Activated naive CD4-positive, alpha-beta T cell treated with anti-CD3 and anti-CD28 coated beads for 36 hours (primary cell): ENCODE measurements at regions of chr7 and their contacts with region 1.

Region 1: DNA sequence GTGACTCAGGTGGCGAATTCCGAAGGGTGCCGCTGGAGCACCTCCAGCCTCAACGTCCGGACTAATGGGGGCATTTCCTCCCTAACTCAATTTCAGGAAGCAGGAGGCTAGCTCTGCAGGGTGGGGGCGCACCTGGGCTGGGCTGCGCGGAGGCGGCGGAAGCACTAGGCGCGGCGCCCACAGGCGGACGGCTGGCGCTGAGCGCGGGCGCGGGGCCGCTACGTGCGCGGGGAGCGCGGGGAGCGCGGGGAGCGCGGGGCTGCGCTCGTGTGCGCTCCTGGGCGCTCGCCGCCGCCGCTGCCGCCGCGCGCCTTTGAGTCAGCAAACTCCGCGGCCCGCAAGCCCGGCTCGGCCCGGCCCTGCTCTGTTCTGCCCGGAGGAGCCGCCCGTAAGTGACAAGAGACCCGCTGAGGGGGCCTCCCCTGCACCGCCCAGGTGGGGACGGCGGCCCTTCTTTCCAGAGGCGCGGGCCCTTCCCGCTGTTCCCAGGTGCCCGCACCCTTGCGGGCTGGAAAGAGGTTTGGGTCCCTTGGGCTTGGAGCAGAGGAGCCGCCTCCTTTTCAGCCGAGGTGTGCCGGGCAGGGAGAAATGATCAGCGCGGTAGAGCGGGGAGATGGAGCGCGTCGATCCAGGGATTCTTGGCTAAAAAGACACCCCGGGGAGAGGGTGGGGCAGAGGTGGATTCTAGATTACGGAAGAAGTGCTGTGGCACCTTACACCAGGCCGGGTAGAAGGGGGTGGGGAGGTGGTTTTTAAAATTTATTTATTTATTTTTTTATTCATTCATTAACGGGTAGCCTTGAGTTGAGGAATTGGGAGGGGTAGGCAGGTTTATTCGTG is at the start of gene SNX10:
- DNase-seq: peak; percentile 78
- H3K4me3 Mint-ChIP-seq: peak within 1 kb of the TSS; percentile 88
- H3K27ac Mint-ChIP-seq: peak within 1 kb of the TSS; percentile 59
- H3K4me1 Mint-ChIP-seq: peaks cover 26% of the 10 kb centered on the region
- H3K27me3 Mint-ChIP-seq: no peaks in the 10 kb centered on the region
- total RNA-seq, gene SNX10: 17.0 to 17.5 TPM

Region 2: DNA sequence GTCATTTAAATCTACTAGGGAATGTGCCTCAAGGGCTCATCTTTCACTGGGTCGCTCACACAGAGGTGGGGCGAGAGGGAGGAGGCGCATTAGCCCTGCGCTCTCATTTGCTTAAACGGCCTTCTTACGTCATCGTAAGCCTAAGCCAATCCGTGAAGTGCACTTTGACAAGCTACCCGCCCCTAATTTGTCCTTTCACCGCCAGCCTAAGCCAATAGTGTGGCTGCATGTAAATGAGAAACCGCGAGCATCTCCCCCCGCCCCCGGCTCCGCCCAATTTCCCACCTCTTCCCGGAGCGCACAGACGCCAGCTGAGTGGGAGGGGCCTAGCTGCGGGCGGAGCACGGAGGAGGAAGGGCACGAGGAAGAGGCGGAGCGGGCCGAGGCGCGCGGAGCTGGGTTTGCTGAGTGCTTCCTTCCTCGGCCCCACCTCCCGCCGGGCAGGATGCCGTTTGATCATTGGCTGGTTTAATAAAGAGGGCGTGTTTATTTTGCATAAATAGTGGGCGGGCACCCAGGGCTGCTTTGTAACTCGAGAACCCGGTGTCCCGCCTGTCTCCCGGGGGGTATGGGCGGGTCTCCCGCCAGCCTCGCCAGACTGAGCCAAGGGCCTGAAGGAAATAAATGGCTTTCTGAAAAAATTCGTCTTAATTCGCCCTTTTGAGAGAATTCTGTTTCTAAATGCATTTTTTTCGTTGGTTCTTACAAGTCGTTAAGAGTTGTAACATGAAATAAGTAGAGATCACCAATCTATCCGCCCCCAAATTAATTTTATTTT is 429.5 kb before region 1 on chr7:
- CTCF ChIA-PET with region 1: no interaction called
- intact Hi-C with region 1: loop called (anchors 1 kb)
- DNase-seq: peak; percentile 99
- H3K4me3 Mint-ChIP-seq: peak overlapping the region; percentile 58
- H3K27ac Mint-ChIP-seq: peak overlapping the region; percentile 38
- H3K4me1 Mint-ChIP-seq: peaks cover 22% of the 10 kb centered on the region
- H3K27me3 Mint-ChIP-seq: peaks cover 70% of the 10 kb centered on the region

Region 3: GRCh38 chr7:26151953-26152781 is 139.8 kb before region 1 on chr7 and contains the start of gene NFE2L3:
- CTCF ChIA-PET with region 1: no interaction called
- intact Hi-C with region 1: loop called (anchors 1 kb)
- DNase-seq: peak; percentile 86
- H3K4me3 Mint-ChIP-seq: peak within 1 kb of the TSS; percentile 95
- H3K27ac Mint-ChIP-seq: peak within 1 kb of the TSS; percentile 98
- H3K4me1 Mint-ChIP-seq: peaks cover 50% of the 10 kb centered on the region
- H3K27me3 Mint-ChIP-seq: no peaks in the 10 kb centered on the region
- total RNA-seq, gene NFE2L3: 12.5 to 12.9 TPM

Region 4: GRCh38 chr7:26305463-26306273 is 13.7 kb after region 1 on chr7:
- CTCF ChIA-PET with region 1: interaction called, 4 read pairs
- intact Hi-C with region 1: loop called (anchors 1 kb)
- DNase-seq: peak; percentile 65
- H3K4me3 Mint-ChIP-seq: peak overlapping the region; percentile 3
- H3K27ac Mint-ChIP-seq: no peak overlapping the region
- H3K4me1 Mint-ChIP-seq: peaks cover 14% of the 10 kb centered on the region
- H3K27me3 Mint-ChIP-seq: no peaks in the 10 kb centered on the region

Region 5: GRCh38 chr7:26864309-26865093 is 572.6 kb after region 1 on chr7 and contains the start of gene SKAP2:
- CTCF ChIA-PET with region 1: no interaction called
- intact Hi-C with region 1: loop called (anchors 1 kb)
- DNase-seq: peak; percentile 94
- H3K4me3 Mint-ChIP-seq: peak within 1 kb of the TSS; percentile 83
- H3K27ac Mint-ChIP-seq: peak within 1 kb of the TSS; percentile 17
- H3K4me1 Mint-ChIP-seq: peaks cover 13% of the 10 kb centered on the region
- H3K27me3 Mint-ChIP-seq: peaks cover 46% of the 10 kb centered on the region
- total RNA-seq, gene SKAP2: 5.6 to 6.6 TPM